Heart left ventricle (tissue), 16 donors: ENCODE measurements at regions of chrX and their contacts with region 1.

Region 1: GRCh38 chrX:2595258-2595657 is 94.5 kb upstream of the DHRSX start:
- DNase-seq: no peak
- ATAC-seq: peak in 1 of 4 donors; percentile 20
- H3K4me3 ChIP-seq: no peak overlapping the region
- H3K27ac ChIP-seq: no peak overlapping the region
- H3K4me1 ChIP-seq: peaks cover 0 to 4% (median 0%) of the 10 kb centered on the region in 12 donors
- H3K27me3 ChIP-seq: no peaks in the 10 kb centered on the region
- CTCF ChIP-seq: no peak
- POLR2A ChIP-seq: no peak

Region 2: DNA sequence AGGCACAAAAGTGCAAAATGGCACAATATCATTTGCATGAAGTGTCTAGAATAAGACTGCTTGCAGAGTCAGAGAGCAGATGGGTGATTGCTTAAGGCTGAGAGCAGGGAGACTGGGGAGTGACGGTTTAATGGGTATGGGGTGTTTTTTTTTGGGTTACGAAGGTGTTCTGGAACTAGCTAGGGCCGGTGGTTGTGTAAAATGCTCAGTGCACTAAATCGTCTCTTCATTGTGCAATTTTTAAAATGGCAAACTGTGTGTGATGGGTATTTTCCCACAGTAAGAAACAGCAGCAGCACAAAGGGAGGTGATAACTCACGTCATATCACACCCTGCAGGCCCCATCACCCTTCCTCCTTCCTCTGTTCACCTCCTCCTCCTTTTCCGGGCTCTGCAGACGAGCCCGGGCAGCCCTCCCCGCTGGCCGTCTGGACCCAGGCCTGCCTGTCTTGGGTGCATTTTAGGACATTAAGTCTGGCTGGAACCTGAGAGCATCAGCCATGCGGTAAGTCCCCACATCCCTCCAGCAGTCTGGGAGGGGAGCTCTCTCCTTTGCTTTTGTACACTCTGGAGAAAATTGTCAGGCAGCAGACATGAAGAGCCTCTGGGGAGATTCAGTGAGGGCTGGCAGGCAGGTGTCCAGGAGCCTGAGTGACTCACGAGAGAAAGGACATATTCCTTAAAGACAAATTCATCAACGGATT is 937.7 kb before region 1 on chrX:
- intact Hi-C with region 1: loop called in 7 of 10 experiments (anchors 1 to 5 kb)
- DNase-seq: peak in 2 of 5 donors; percentile 13 to 26
- ATAC-seq: peak in 3 of 4 donors; percentile 53 to 85 (median 55)
- H3K4me3 ChIP-seq: peak overlapping the region in 3 of 12 donors; percentile 2 to 51 (median 19)
- H3K27ac ChIP-seq: peak overlapping the region in 1 of 12 donors; percentile 49
- H3K4me1 ChIP-seq: peaks cover 0 to 12% (median 6%) of the 10 kb centered on the region in 12 donors
- H3K27me3 ChIP-seq: peaks cover 0 to 3% (median 0%) of the 10 kb centered on the region in 9 donors
- CTCF ChIP-seq: no peak
- POLR2A ChIP-seq: no peak

Region 3: DNA sequence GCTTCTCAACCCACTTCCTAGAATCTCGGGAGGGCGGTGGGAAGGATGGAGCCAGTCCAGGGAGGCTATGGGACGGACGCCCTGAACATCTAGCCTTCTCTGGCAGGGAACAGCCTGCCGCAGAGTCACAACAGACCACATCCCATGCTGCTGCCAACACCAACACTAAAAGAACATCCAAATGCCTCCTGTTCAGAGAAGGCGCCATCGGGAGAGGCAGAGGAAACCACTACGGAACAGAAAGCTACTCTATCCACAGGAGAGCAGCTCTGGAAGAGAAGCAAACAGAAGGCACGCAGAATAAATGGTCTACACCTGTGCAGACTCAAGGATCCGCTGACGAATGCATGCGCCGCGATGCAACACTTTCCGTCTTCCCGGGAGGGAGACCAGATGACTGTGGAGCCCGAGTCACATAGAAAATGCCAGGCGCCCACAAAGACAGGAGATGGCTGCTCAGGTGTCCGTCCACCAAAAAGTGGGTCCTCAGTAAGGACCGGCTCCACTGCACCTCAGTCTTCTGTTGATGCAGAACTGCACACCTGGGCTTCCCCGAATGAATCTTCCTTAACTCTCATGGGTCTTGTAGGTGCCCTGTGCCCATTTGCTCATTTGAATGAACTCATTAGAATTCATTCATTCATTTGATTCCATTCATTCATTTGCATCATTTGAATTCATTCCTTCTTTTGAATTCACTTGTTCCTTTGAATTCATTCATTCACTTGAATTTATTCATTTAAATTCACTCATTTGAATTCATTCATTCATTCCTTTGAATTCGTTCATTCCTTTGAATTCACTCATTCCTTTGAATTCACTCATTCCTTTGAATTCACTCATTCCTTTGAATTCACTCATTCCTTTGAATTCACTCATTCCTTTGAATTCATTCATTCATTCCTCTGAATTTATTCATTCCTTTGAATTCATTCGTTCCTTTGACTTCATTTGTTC is 311.9 kb before region 1 on chrX:
- intact Hi-C with region 1: loop called in 4 of 10 experiments (anchors 5 to 10 kb)
- DNase-seq: no peak
- ATAC-seq: no peak
- H3K4me3 ChIP-seq: no peak overlapping the region
- H3K27ac ChIP-seq: no peak overlapping the region
- H3K4me1 ChIP-seq: no peaks in the 10 kb centered on the region
- H3K27me3 ChIP-seq: no peaks in the 10 kb centered on the region
- CTCF ChIP-seq: no peak
- POLR2A ChIP-seq: no peak

Region 4: DNA sequence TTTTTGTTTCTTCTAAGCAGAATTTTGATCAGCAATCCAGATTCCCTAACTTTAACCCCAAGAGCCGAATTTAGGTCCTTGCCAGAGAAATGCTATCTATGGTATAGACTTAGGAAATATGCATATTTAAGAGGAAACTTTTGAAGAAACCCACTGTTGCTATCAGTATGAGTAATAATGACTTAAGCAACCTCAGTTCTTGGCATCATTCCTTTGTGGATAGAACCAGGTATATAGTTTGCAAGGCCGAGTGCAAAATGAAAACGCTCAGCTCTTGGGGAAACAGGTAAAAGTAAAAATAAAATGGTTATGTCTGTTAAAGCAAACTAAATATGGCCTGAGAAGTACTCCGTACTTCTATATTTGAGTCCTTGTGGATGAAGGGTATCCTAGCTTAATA is 524.1 kb after region 1 on chrX:
- intact Hi-C with region 1: loop called in 1 of 10 experiments (anchors 10 kb)
- DNase-seq: no peak
- ATAC-seq: no peak
- H3K4me3 ChIP-seq: no peak overlapping the region
- H3K27ac ChIP-seq: no peak overlapping the region
- H3K4me1 ChIP-seq: no peaks in the 10 kb centered on the region
- H3K27me3 ChIP-seq: no peaks in the 10 kb centered on the region
- CTCF ChIP-seq: no peak
- POLR2A ChIP-seq: no peak